ENCODE measurements at regions of chr2 and their contacts with region 1.

Region 1: GRCh38 chr2:9378433-9379390 is 44.6 kb downstream of the ITGB1BP1 start:
- DNase-seq: no peak
- H3K4me3 ChIP-seq: no peak overlapping the region
- H3K27me3 ChIP-seq: no peaks in the 10 kb centered on the region
- CTCF ChIP-seq: no peak

Region 2: DNA sequence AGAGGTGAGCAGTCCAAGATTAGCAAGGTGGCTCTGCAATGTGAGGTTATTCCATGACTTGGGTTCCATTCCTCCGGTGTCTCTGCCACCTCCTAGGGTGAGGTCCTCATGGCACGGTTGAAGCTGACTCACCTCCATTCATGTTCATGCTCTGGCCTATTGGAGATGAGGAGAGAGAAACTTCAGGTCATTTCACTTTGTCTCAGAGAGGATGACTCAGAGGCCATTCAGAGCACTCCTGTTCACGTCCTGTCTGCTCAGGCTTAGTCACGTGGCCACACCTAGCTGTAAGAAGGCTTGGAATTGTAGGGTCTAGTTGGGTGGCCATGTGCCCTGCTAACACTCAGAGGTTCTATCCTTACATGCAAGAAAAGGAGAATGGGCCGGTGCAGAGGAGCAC is 307.7 kb before region 1 on chr2:
- CTCF ChIA-PET with region 1: no interaction called
- POLR2A ChIA-PET with region 1: no interaction called
- DNase-seq: peak; percentile 21
- H3K4me3 ChIP-seq: no peak overlapping the region
- H3K27me3 ChIP-seq: no peaks in the 10 kb centered on the region
- CTCF ChIP-seq: no peak

Region 3: DNA sequence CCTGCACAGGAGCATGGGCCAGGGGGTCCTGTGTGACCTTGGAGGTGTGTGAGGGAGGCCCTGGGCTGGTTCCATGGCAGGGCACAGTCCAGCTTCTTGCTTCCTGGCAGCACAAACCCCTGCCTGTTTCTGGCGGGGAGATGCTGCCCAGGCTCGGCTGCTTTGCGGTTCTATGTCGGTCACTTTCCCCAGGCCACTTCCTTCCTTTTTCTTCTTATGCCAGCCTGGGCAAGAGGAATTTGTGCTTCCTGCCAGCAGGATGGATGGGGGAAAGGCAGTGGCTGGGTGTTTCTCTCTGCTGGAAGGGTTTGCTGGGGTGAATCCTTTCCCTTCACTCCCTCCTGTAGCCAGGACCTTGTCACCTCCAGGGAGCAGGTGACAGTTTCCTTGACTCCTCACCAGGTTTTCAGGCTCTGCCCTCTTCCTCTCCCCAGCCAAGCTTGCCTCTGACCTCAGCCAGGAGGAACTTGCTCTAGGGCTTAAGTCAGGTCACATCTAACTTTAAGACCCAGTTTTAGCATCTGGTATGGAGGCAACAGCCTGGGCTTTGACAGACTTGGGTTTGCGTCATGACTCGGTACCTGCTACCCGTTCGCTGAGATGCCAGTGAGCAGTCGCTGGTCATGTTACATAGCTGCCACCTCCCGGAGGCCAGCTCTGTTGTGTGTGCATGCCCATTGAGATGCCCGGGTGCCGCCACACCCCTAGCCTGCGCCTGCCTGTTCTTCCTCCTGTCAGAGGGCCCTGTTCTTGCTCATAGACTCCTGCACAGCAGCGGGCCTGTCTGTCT is 147.6 kb before region 1 on chr2:
- CTCF ChIA-PET with region 1: no interaction called
- POLR2A ChIA-PET with region 1: interaction called, 11 read pairs
- DNase-seq: no peak
- H3K4me3 ChIP-seq: no peak overlapping the region
- H3K27me3 ChIP-seq: no peaks in the 10 kb centered on the region
- CTCF ChIP-seq: no peak

Measured in BJ (cell line).